GM10248 (cell line): ENCODE measurements at regions of chr3 and their contacts with region 1.

Region 1: DNA sequence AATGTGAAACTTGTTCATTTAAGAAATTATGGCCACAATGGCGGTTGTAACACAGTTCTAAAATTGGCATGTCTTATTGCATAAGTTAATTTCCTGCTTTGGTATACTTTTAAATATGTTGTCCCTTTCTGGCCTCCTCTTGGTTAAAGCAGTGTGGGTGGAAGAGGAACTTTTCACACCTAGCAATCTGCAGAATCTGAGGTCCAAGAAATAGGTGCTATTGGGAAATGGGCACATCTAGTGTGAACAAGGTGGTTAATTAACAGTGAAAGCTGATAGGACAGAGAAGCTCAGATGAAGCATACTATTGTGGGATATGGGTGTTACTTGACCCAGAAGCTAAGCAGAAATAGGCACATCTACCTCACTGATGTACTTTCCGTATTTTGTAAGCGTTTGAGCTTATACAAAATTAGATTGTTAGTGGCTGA is 10.6 kb downstream of the CMC1 start:
- DNase-seq: no peak
- CTCF ChIP-seq: no peak

Region 2: DNA sequence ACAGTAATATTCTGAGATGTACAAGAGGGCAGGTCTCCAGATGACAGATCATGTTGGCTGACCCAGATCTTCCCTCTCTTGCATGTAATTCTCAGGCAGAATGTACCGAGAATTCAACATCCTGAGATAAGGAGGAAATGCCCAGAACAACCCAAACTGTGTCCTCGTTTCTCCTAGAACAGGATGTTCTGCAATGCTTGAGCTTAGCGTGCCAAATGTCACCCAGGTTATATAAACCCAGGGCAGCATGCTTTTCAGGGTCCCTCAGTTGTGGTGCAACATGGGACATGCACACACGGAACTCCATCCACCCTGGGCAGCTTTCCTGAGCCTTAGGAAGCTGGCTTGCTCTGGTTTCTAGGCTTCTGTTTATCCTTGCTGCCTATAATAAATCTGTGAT is 112.7 kb before region 1 on chr3:
- CTCF ChIA-PET with region 1: no interaction called
- POLR2A ChIA-PET with region 1: no interaction called
- DNase-seq: no peak
- CTCF ChIP-seq: no peak

Region 3: DNA sequence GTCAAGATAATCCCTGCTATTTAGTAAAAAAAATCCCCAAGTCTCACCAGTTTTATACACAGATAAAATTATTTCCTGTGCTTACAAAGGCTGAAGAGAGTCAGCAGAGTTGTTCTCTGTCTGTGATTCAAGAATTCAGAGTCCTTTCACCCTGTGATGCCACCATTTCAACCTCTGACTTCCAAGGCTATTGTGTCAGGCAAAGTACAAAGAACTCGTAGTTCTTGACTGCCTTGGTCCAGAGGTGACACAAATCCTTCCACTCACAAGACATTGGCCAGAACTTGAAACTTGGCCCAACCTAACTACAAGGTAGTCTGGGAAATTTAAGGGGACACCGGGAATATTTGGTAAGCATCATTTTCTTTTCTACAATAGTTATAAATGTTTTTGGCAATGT is 45.5 kb before region 1 on chr3:
- CTCF ChIA-PET with region 1: no interaction called
- POLR2A ChIA-PET with region 1: no interaction called
- DNase-seq: no peak
- CTCF ChIP-seq: no peak

Region 4: DNA sequence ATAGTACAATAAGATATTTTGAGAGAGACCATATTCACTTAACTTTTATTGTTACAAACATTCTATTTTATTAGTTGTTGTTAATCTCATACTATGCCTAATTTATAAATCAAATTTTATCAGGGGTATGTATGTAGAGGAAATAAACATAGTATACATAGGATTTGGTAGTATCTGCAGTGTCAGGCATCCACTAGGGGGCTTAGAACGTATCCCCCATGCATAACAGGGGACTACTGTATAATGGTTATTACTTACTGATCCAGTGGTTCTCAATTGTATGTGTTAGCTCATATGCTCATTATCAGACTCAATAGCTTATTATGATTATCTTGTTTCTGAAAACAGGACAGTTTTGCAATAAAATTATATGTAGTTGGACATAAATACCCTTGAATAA is 17.0 kb after region 1 on chr3:
- CTCF ChIA-PET with region 1: interaction called, 11 read pairs
- POLR2A ChIA-PET with region 1: no interaction called
- DNase-seq: no peak
- CTCF ChIP-seq: no peak

Region 5: GRCh38 chr3:28376424-28376823 is 124.4 kb after region 1 on chr3:
- CTCF ChIA-PET with region 1: no interaction called
- POLR2A ChIA-PET with region 1: no interaction called
- DNase-seq: no peak
- CTCF ChIP-seq: no peak